Activated CD4-positive, alpha-beta memory T cell treated with anti-CD3 and anti-CD28 coated beads, Interleukin-2, amount 10 ng/mL, durations not matched to agents 7 days and 5 days (primary cell): ENCODE measurements at regions of chr14 and their contacts with region 1.

Region 1: GRCh38 chr14:57390028-57390805 is at the start of gene NAA30:
- DNase-seq: peak; percentile 95
- H3K4me3 Mint-ChIP-seq: peak within 1 kb of the TSS; percentile 89
- H3K27ac Mint-ChIP-seq: peak within 1 kb of the TSS; percentile 90
- H3K4me1 Mint-ChIP-seq: peaks cover 46% of the 10 kb centered on the region
- H3K27me3 Mint-ChIP-seq: no peaks in the 10 kb centered on the region
- total RNA-seq, gene NAA30: 18.8 to 21.1 TPM

Region 2: DNA sequence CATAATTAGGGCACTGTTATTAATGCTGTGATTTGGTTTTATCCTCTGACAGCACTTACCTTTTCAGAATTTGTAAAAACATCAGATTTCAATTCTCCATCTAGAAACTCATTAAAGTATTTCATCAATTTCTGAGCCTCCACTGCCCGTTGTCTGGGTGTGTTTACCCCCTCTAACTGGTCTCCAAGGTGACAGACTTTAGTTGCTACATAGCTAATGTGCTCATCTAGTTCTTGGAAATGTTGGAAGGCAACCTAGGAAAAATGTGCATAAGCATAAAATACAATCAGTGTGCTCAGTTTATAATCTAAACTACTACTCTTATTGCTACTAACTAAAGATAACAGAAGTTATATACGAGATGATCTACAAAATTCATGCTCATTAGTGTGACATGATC is 146.1 kb before region 1 on chr14:
- CTCF ChIA-PET with region 1: no interaction called
- POLR2A ChIA-PET with region 1: no interaction called
- DNase-seq: no peak
- H3K4me3 Mint-ChIP-seq: no peak overlapping the region
- H3K27ac Mint-ChIP-seq: no peak overlapping the region
- H3K4me1 Mint-ChIP-seq: no peaks in the 10 kb centered on the region
- H3K27me3 Mint-ChIP-seq: no peaks in the 10 kb centered on the region

Region 3: GRCh38 chr14:57268161-57269069 is 121.8 kb before region 1 on chr14 and contains the starts of genes AP5M1 and EXOC5:
- CTCF ChIA-PET with region 1: interaction called, 5 read pairs
- POLR2A ChIA-PET with region 1: interaction called, 36 read pairs
- DNase-seq: peak; percentile 94
- H3K4me3 Mint-ChIP-seq: peak within 1 kb of the TSS; percentile 97
- H3K27ac Mint-ChIP-seq: peak within 1 kb of the TSS; percentile 100
- H3K4me1 Mint-ChIP-seq: peaks cover 58% of the 10 kb centered on the region
- H3K27me3 Mint-ChIP-seq: no peaks in the 10 kb centered on the region
- total RNA-seq, gene AP5M1: 40.6 to 44.3 TPM
- total RNA-seq, gene EXOC5: 72.1 to 76.6 TPM

Region 4: DNA sequence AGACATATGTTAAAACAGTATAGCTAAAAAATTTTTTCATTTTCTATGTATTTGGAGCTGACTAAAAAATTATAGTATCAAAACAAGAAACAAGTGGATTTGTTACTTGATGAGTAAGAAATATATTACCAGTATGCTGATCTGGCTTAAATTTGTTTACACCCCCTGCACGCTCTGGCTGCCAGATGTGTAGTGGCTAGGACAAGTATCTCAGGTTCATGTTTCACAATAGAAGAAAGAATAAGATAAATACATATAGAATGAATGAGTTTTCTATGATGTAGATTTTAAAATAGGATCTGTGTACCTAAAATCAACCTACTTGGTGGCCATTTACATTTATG is 13.3 kb after region 1 on chr14:
- CTCF ChIA-PET with region 1: interaction called, 5 read pairs
- POLR2A ChIA-PET with region 1: interaction called, 47 read pairs
- DNase-seq: no peak
- H3K4me3 Mint-ChIP-seq: no peak overlapping the region
- H3K27ac Mint-ChIP-seq: no peak overlapping the region
- H3K4me1 Mint-ChIP-seq: peaks cover 25% of the 10 kb centered on the region
- H3K27me3 Mint-ChIP-seq: no peaks in the 10 kb centered on the region